ENCODE measurements at regions of chr4 and their contacts with region 1.

Region 1: GRCh38 chr4:110034026-110034393 is 121.3 kb downstream of the EGF start:
- DNase-seq: peak; percentile 52
- ATAC-seq: no peak
- H3K4me3 Mint-ChIP-seq: no peak overlapping the region
- H3K27ac Mint-ChIP-seq: no peak overlapping the region
- H3K4me1 Mint-ChIP-seq: peaks cover 5% of the 10 kb centered on the region
- H3K27me3 Mint-ChIP-seq: peaks cover 25% of the 10 kb centered on the region
- CTCF ChIP-seq: no peak

Region 2: DNA sequence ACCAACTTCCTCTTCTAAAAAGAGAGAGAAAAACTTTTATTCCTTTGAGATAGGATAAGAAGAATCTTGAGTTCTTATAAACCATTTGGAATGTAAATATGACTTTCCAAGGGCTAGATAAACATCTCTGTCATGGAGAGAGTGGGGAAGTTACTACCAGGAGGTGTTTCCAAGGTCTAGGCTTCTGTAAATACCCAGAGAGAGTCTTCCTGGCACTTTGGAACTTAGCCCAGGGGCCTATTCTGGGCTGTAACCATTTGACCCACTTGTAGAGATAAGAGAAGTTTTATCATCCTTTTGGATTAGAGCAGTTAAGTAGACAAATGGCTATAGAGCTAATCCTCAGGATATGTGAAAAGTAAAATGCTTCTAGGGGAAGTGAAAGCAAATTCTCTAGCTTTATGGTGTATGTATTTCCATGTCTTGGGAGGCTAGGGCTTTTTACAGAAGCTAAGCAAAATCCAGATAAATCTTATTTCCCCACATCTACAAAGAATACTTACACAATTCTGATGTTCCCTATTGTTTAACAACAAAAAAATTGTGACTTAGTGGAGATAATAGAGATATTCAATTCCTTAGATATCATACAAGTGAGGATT is 422.9 kb before region 1 on chr4:
- CTCF ChIA-PET with region 1: no interaction called
- POLR2A ChIA-PET with region 1: no interaction called
- intact Hi-C with region 1: no loop called
- DNase-seq: no peak
- ATAC-seq: no peak
- H3K4me3 Mint-ChIP-seq: no peak overlapping the region
- H3K27ac Mint-ChIP-seq: no peak overlapping the region
- H3K4me1 Mint-ChIP-seq: peaks cover 60% of the 10 kb centered on the region
- H3K27me3 Mint-ChIP-seq: no peaks in the 10 kb centered on the region
- CTCF ChIP-seq: no peak

Region 3: DNA sequence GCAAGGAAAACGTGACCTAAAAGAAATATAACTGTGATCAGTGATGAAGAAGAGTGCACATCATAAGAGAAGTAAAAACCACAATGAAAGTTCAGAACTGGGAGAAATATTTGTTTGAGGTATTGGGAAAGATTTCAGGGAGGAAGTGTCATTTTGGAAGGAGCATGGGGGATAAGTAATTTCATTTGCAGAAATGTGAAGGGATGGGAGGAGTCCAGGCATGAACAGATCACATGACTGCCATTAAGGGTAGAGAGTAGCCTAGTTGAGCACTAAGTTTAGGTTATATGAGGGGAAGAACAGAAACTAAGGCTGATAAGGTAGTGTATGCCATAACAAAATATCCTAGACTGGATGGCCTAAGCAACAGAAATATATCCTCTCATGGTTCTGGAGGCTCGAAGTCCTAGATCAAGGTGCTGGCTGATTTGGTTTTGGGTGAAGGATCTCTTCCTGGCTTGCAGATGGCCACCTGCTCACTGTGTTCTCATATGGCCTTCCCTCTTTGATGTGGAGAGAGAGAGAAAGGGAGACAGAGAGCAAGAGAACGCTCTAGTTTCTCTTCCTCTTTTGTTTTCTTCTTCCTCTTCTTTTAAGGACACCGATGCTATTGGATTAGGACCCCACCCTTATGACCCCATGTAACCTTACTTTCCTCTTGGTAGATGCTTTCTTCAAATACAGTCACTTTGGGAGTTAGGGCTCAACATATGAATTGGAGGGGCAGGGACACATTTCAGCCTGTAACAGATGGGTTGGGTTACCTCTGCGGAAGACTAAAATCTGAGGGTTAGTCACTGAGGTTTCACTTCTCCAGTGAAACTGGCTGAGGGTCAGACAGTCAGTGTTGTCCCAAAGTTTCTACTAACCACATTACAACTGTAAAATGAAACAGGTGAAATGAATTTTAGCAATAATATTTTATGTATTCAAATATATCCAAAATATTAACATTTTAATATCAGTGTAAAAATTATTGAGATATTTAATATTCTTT is 43.5 kb before region 1 on chr4:
- CTCF ChIA-PET with region 1: no interaction called
- POLR2A ChIA-PET with region 1: no interaction called
- intact Hi-C with region 1: no loop called
- DNase-seq: no peak
- ATAC-seq: no peak
- H3K4me3 Mint-ChIP-seq: no peak overlapping the region
- H3K27ac Mint-ChIP-seq: no peak overlapping the region
- H3K4me1 Mint-ChIP-seq: peaks cover 12% of the 10 kb centered on the region
- H3K27me3 Mint-ChIP-seq: peaks cover 9% of the 10 kb centered on the region
- CTCF ChIP-seq: no peak

Region 4: DNA sequence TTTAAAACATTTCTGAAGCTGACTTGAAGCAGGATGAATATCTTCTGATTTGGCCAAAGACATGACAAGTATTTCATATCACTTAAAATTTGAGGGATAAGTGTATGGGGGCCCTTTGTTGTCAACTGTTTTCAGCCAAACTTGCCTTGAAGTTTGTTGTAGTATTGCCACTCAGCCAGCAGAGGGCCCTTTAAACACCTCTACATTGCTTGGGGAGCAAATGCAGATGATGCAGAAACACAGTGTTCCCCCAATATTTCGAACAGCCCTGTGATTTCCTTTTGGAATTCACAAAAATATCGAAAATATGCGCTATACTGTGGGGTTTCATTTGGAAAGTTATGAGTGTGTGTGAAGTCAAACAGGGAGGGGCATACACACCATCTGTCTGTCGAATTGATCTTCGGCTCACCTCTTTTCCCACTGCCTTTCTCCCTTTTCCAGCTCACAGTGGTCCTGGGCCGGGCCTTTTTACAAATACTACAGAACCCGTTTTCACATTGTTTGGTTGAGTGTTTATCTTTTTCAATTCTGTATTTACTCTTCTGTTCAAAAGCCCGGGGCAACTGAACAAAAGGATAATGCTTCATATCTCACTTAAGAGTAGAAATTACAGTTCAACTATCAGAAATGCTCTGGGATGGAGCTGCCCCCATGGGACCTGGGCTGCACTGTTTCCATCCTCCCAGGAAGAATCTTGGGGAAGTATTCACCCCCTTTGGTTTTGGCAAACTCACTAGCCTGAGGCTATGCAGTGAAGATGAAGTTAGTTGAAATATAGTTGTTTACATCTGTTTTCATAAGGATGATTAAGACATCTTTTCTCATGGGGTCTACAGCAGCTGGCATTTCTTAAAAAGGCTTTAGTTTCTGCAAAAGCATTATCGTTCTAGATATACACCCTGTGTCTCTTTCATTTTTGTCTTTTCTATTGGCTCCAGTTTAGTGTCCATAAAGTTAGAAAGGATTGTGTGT is 16.2 kb after region 1 on chr4:
- CTCF ChIA-PET with region 1: interaction called, 15 read pairs
- POLR2A ChIA-PET with region 1: no interaction called
- intact Hi-C with region 1: no loop called
- DNase-seq: peak; percentile 65
- ATAC-seq: peak; percentile 73
- H3K4me3 Mint-ChIP-seq: no peak overlapping the region
- H3K27ac Mint-ChIP-seq: no peak overlapping the region
- H3K4me1 Mint-ChIP-seq: peaks cover 4% of the 10 kb centered on the region
- H3K27me3 Mint-ChIP-seq: no peaks in the 10 kb centered on the region
- CTCF ChIP-seq: peak; percentile 64

Measured in activated CD8-positive, alpha-beta T cell treated with anti-CD3 and anti-CD28 coated beads for 36 hours (primary cell).